ENCODE measurements at regions of chr10 and their contacts with region 1.

Region 1: DNA sequence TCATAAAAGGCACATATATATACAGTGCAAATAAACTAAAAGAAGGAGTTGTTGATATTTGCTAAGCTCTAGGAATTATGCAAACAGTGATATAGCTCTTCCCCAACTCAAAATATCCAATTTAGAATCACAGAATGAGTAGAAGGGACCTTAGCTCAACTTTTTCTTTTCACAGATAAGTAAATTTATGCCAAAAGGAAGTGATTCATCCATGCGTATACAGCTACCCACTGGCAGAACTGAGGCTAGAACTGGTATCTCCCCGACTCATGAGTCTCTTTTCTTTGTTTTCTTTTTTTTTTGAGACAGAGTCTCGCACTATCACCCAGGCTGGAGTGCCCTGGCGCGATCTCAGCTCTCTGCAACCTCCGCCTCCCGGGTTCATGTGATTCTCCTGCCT is 54.2 kb upstream of the SVIL start:
- DNase-seq: peak; percentile 76
- ATAC-seq: peak; percentile 91
- H3K4me3 ChIP-seq: no peak overlapping the region
- H3K27ac ChIP-seq: peak overlapping the region; percentile 56
- H3K4me1 ChIP-seq: peaks cover 37% of the 10 kb centered on the region
- H3K27me3 ChIP-seq: no peaks in the 10 kb centered on the region
- CTCF ChIP-seq: no peak

Region 2: GRCh38 chr10:29658984-29659965 is 29.7 kb before region 1 on chr10:
- CTCF ChIA-PET with region 1: no interaction called
- POLR2A ChIA-PET with region 1: interaction called, 3 read pairs
- intact Hi-C with region 1: loop called (anchors 2 kb)
- DNase-seq: peak; percentile 95
- ATAC-seq: peak; percentile 94
- H3K4me3 ChIP-seq: peak overlapping the region; percentile 30
- H3K27ac ChIP-seq: peak overlapping the region; percentile 94
- H3K4me1 ChIP-seq: peaks cover 42% of the 10 kb centered on the region
- H3K27me3 ChIP-seq: no peaks in the 10 kb centered on the region
- CTCF ChIP-seq: no peak

Measured in PC-3 (cell line).